ENCODE measurements at regions of chr15 and their contacts with region 1.

Region 1: DNA sequence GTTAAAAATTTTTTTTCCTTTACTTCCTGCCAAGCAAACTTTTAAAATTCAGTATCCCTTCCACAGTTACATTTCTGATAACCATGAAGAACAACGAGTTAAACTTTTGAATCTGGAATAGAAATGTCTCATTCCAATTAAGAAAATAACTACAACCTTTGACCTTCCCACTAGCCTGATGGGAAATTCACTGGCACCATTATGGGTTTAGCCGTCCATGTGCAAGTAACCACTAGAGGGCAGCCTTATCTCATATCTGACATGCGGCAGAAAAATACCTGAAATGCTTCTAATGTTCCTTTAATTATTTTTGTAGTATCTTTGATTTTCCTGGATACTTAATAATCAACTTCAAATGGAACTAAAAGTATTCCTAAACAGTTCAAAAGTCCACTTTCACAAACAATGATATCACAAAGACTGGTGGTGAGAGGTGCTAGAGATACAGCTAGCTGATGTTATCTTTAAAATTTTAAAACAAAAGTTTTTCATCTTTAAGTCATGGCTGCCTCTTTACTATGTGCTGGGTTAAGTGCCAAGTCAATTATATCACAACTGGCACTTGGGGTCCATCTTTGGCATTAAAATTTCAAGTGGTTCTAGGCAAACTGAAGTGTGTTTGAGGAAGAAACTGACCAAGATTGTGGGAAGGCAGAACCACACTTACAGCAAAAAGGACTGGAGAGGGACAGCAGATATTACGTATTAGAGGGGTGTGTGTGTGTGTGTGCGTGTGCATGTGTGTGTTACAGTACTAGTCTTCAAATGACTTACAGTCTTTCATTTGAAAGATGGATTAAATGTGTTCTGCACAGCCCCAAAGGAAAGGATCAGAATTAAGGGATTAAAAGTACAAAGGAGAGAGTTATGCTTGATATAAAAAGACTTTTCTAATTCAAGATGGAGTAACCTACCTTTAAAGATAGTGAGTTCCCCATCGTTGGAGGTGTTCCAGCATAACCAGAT is 107.1 kb upstream of the ICE2 start:
- DNase-seq: peak in 4 of 5 donors; percentile 37 to 70 (median 44)
- H3K4me3 ChIP-seq: no peak overlapping the region
- H3K27ac ChIP-seq: no peak overlapping the region
- H3K4me1 ChIP-seq: peaks cover 8% of the 10 kb centered on the region
- H3K27me3 ChIP-seq: no peaks in the 10 kb centered on the region
- CTCF ChIP-seq: peak; percentile 50 to 91 (median 86)
- EP300 ChIP-seq: no peak
- POLR2A ChIP-seq: no peak

Region 2: GRCh38 chr15:60520825-60521368 is 65.1 kb before region 1 on chr15:
- intact Hi-C with region 1: loop called in 1 of 4 experiments (anchors 10 kb)
- DNase-seq: peak; percentile 43 to 72 (median 68)
- H3K4me3 ChIP-seq: no peak overlapping the region
- H3K27ac ChIP-seq: no peak overlapping the region
- H3K4me1 ChIP-seq: no peaks in the 10 kb centered on the region
- H3K27me3 ChIP-seq: no peaks in the 10 kb centered on the region
- CTCF ChIP-seq: peak; percentile 64 to 72 (median 66)
- EP300 ChIP-seq: no peak
- POLR2A ChIP-seq: no peak

Region 3: DNA sequence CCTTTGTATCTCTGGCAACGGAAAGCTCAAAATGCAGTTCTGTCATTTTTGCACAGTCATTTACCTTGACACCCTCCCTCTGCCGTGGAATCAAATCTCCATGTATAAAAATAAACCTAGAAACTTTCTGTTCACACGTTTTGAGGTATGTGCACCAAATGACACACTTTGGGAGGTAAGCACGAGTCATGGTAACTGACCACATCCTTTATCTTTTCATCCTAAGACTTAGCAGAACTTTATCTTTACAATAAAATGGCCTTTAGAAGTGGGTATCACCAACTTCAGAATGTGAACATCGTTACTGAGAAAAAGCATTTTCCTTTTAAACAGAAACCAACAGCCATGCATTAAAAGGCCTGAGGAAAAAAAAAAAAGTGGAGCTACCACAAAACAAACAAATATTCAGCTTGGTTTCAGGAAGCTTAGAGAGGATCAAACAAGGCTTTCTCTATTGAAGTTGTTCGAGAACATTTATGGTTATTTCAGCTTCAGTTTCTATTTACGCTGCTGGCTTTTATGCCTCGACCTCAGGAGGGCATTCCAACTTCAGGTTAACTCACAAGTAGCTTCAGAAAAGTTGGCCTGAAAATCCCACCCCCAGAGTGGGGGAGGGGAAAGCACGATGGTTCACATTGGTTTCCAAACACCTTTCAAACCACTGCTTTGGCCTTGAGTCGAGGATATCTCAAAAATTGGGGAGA is 64.0 kb after region 1 on chr15:
- intact Hi-C with region 1: no loop called
- DNase-seq: no peak
- H3K4me3 ChIP-seq: no peak overlapping the region
- H3K27ac ChIP-seq: no peak overlapping the region
- H3K4me1 ChIP-seq: peaks cover 3% of the 10 kb centered on the region
- H3K27me3 ChIP-seq: no peaks in the 10 kb centered on the region
- CTCF ChIP-seq: no peak
- EP300 ChIP-seq: no peak
- POLR2A ChIP-seq: no peak

Region 4: GRCh38 chr15:61069394-61070075 is 483.5 kb after region 1 on chr15:
- intact Hi-C with region 1: no loop called
- DNase-seq: no peak
- H3K4me3 ChIP-seq: no peak overlapping the region
- H3K27ac ChIP-seq: no peak overlapping the region
- H3K4me1 ChIP-seq: no peaks in the 10 kb centered on the region
- H3K27me3 ChIP-seq: no peaks in the 10 kb centered on the region
- CTCF ChIP-seq: no peak
- EP300 ChIP-seq: no peak
- POLR2A ChIP-seq: no peak